ENCODE measurements at regions of chr19 and their contacts with region 1.

Region 1: DNA sequence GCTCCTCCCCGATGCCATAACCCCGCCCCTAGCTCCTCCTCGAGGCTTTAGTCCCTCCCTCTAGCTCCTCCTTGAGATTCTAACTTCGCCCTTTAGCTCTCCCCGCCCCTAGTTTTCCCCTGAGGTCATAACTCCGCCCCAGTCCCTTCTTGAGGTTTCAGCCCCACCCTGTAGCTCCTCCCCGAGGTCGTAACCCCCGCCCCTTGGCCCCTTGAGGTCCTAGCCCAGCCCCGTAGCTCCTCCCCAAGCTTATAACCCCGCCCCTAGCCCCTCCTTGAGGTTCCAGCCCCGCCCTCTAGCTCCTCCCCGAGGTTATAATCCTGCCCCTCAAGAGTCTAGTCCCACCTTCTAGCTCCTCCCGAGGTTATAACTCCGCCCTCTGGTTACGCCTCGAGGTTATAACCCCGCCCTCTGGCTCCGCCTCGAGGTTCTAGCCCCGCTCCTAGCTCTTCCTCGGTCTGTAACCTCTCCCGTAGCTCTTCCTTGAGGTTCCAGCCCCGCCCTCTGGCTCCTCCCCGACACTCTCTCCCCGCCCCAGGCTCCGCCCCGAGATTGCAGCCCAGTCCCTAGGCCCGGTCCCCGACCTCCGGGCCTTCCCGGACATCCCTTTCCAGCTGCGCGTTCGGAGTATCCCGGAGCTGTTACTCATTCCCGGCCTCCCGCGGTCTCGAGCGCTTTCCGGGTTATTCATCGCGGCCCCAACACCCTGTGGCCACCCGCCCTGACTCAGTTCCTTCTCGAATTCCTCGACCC is 1.4 kb downstream of the PLAUR start:
- DNase-seq: peak; percentile 98
- ATAC-seq: peak; percentile 92
- H3K4me3 Mint-ChIP-seq: peak overlapping the region; percentile 79
- H3K27ac Mint-ChIP-seq: peak overlapping the region; percentile 77
- H3K4me1 Mint-ChIP-seq: peaks cover 47% of the 10 kb centered on the region
- H3K27me3 Mint-ChIP-seq: peaks cover 8% of the 10 kb centered on the region

Region 2: GRCh38 chr19:43658494-43658893 is 10.1 kb before region 1 on chr19:
- CTCF ChIA-PET with region 1: interaction called, 13 read pairs
- POLR2A ChIA-PET with region 1: no interaction called
- DNase-seq: no peak
- ATAC-seq: no peak
- H3K4me3 Mint-ChIP-seq: no peak overlapping the region
- H3K27ac Mint-ChIP-seq: no peak overlapping the region
- H3K4me1 Mint-ChIP-seq: peaks cover 6% of the 10 kb centered on the region
- H3K27me3 Mint-ChIP-seq: no peaks in the 10 kb centered on the region

Region 3: GRCh38 chr19:43700395-43701000 is 31.9 kb after region 1 on chr19:
- CTCF ChIA-PET with region 1: interaction called, 10 read pairs
- POLR2A ChIA-PET with region 1: interaction called, 5 read pairs
- DNase-seq: no peak
- ATAC-seq: no peak
- H3K4me3 Mint-ChIP-seq: peak overlapping the region; percentile 70
- H3K27ac Mint-ChIP-seq: peak overlapping the region; percentile 68
- H3K4me1 Mint-ChIP-seq: peaks cover 20% of the 10 kb centered on the region
- H3K27me3 Mint-ChIP-seq: peaks cover 13% of the 10 kb centered on the region

Region 4: DNA sequence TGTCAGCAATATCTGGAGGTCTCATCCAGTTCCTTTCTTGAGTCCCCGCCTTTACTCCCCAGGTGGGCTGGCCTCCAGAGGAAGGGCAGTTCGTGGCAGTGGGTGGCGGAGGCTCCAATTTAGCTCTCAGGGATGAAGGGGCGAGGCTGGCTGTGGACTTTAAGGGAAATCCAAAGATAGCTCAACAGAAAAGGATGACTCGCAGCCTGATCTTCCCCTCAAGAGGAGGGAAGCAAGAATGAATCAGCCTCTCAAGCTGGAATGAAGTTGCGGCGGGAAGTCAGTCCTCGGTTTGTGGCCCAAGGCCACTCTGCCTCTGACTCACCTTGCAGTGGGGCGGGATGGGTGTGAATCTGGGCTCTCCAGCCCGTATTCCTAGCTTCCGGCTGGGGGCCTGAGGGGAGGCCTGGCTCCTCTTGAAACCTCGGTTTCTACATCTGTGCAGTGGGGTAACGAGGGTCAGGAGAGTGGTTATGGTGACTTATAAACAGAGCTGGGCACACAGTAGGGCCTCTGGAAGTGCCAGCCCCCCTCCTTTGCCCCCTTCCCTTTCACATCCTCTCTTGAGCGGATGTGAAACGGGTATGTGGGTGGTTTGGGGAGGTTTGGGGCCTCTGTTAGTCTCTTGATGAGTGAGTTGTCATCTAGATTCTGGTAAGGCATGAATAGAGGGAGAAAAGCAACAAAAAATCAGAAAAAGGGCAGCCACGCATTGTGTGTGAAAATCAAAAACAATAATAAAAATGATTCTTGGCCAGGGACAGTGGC is 96.7 kb after region 1 on chr19:
- CTCF ChIA-PET with region 1: interaction called, 22 read pairs
- POLR2A ChIA-PET with region 1: no interaction called
- DNase-seq: peak; percentile 86
- ATAC-seq: peak; percentile 83
- H3K4me3 Mint-ChIP-seq: peak overlapping the region; percentile 49
- H3K27ac Mint-ChIP-seq: peak overlapping the region; percentile 93
- H3K4me1 Mint-ChIP-seq: peaks cover 56% of the 10 kb centered on the region
- H3K27me3 Mint-ChIP-seq: no peaks in the 10 kb centered on the region

Region 5: DNA sequence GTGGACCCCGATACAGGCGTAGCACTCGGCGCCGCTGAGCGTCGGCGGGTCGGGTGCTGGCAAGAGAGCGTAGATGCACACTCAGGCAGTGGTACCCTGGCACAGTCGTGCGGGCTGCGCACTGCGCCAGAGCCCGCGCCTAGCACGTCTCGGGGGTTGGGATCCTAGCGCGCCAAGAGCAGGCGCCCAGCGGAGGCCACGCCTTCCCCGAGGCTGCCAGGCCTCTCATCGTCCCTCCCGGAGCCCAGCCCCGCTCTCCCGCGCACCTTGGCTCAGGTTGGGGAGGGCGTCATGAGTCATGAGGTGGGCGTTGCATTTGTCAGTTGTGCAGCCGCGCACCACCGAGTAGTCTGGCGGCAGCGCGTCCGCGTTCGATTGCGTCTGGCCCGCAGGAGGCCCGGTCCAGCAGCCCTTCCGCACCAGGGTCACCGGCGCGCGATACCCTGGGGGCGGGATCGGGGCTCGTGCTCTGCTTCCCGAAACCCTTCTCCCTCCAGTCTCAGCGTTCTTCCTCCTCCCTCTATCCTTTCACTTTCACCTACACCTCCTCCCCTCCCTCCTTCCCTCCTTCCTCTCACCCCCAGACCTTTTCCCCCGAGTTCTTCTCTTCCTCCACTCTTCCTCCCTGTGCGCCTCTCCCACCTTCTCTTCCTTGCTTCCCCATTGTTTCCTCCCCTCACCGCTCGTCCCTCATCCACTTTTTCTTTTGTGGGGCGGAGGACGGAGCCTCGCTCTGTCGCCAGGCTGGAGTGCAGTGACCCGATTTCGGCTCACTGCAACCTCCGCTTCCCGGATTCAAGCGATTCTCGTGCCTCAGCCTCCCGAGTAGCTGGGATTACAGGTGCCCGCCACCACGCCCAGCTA is 130.2 kb after region 1 on chr19:
- CTCF ChIA-PET with region 1: no interaction called
- POLR2A ChIA-PET with region 1: no interaction called
- DNase-seq: peak; percentile 75
- ATAC-seq: peak; percentile 88
- H3K4me3 Mint-ChIP-seq: peak overlapping the region; percentile 73
- H3K27ac Mint-ChIP-seq: peak overlapping the region; percentile 37
- H3K4me1 Mint-ChIP-seq: peaks cover 19% of the 10 kb centered on the region
- H3K27me3 Mint-ChIP-seq: peaks cover 14% of the 10 kb centered on the region

Region 6: GRCh38 chr19:43809762-43810696 is 141.4 kb after region 1 on chr19:
- CTCF ChIA-PET with region 1: interaction called, 18 read pairs
- POLR2A ChIA-PET with region 1: no interaction called
- DNase-seq: no peak
- ATAC-seq: peak; percentile 57
- H3K4me3 Mint-ChIP-seq: no peak overlapping the region
- H3K27ac Mint-ChIP-seq: no peak overlapping the region
- H3K4me1 Mint-ChIP-seq: no peaks in the 10 kb centered on the region
- H3K27me3 Mint-ChIP-seq: peaks cover 12% of the 10 kb centered on the region